ENCODE measurements at regions of chr6 and their contacts with region 1.

Region 1: DNA sequence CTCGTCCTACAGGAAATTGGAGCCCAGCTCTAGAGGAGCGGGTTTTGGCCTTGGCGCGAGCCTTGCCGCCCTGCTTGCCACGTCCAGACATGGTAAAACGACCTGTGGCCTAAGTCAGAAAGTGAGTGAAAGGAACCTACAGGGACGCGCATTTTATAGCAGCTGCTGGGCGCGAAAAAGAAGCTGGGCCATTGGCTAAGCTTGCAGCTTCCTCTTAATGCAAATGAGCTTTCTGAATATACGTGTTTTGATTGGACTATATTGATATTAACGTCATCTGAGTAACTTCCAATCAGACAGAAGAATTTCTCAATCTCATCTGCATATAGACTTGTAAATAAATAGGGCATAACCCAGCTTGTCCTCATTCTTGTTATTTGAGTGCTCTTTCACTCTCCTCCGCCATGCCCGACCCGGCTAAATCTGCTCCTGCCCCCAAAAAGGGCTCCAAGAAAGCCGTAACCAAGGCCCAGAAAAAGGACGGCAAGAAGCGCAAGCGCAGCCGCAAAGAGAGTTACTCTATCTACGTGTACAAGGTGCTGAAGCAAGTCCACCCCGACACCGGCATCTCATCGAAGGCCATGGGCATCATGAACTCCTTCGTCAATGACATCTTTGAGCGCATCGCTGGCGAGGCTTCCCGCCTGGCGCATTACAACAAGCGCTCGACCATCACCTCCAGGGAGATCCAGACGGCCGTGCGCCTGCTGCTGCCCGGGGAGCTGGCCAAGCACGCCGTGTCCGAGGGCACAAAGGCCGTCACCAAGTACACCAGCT is 18.9 kb downstream of the OR2B2 start:
- DNase-seq: peak; percentile 86 to 95
- ATAC-seq: peak; percentile 70 to 85 (median 72)
- H3K4me3 ChIP-seq: peak overlapping the region; percentile 58
- H3K4me3 Mint-ChIP-seq: no peak overlapping the region
- H3K27ac ChIP-seq: peak overlapping the region; percentile 76
- H3K27ac Mint-ChIP-seq: no peak overlapping the region
- H3K4me1 ChIP-seq: peaks cover 48% of the 10 kb centered on the region
- H3K4me1 Mint-ChIP-seq: peaks cover 34 to 36% of the 10 kb centered on the region in 2 donors
- H3K27me3 ChIP-seq: no peaks in the 10 kb centered on the region
- H3K27me3 Mint-ChIP-seq: no peaks in the 10 kb centered on the region
- CTCF ChIP-seq: no peak

Region 2: GRCh38 chr6:26196846-26197648 is 1696.2 kb before region 1 on chr6:
- intact Hi-C with region 1: loop called (anchors 5 kb)
- DNase-seq: peak; percentile 65 to 94
- ATAC-seq: peak; percentile 53 to 73 (median 62)
- H3K4me3 ChIP-seq: peak overlapping the region; percentile 92
- H3K4me3 Mint-ChIP-seq: peak overlapping the region; percentile 96
- H3K27ac ChIP-seq: peak overlapping the region; percentile 94
- H3K27ac Mint-ChIP-seq: peak overlapping the region; percentile 98 to 99
- H3K4me1 ChIP-seq: peaks cover 26% of the 10 kb centered on the region
- H3K4me1 Mint-ChIP-seq: peaks cover 45 to 51% of the 10 kb centered on the region in 2 donors
- H3K27me3 ChIP-seq: no peaks in the 10 kb centered on the region
- H3K27me3 Mint-ChIP-seq: no peaks in the 10 kb centered on the region
- CTCF ChIP-seq: no peak

Region 3: DNA sequence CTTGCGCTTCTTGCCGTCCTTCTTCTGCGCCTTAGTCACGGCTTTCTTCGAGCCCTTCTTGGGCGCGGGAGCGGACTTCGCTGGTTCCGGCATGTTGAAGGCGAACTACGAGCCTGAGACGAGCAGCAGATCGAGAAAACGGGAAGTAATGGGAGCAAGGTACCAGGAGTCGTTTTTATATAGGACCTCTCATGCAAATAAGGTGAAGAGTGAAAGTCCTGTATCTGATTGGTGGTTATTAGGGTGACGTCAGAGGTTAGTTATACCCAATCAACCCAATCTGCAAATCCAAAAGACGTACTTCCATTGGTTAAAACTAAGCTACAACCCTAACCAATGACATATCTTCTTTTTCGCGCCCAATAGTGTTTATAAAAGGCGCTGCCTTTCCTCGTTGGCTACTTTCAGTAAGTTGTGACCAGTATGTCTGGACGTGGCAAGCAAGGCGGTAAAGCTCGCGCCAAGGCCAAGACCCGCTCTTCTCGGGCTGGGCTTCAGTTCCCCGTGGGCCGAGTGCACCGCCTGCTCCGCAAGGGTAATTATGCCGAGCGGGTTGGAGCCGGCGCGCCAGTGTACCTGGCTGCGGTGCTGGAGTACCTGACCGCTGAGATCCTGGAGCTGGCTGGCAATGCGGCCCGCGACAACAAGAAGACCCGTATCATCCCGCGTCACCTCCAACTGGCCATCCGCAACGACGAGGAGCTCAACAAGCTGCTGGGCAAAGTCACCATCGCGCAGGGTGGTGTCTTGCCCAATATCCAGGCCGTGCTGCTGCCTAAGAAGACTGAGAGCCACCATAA is 746.3 kb before region 1 on chr6:
- intact Hi-C with region 1: loop called (anchors 5 kb)
- DNase-seq: peak; percentile 74 to 97
- ATAC-seq: peak; percentile 76 to 88 (median 82)
- H3K4me3 ChIP-seq: peak overlapping the region; percentile 74
- H3K4me3 Mint-ChIP-seq: no peak overlapping the region
- H3K27ac ChIP-seq: peak overlapping the region; percentile 88
- H3K27ac Mint-ChIP-seq: no peak overlapping the region
- H3K4me1 ChIP-seq: peaks cover 23% of the 10 kb centered on the region
- H3K4me1 Mint-ChIP-seq: peaks cover 0 to 3% of the 10 kb centered on the region in 2 donors
- H3K27me3 ChIP-seq: no peaks in the 10 kb centered on the region
- H3K27me3 Mint-ChIP-seq: no peaks in the 10 kb centered on the region
- CTCF ChIP-seq: no peak

Region 4: DNA sequence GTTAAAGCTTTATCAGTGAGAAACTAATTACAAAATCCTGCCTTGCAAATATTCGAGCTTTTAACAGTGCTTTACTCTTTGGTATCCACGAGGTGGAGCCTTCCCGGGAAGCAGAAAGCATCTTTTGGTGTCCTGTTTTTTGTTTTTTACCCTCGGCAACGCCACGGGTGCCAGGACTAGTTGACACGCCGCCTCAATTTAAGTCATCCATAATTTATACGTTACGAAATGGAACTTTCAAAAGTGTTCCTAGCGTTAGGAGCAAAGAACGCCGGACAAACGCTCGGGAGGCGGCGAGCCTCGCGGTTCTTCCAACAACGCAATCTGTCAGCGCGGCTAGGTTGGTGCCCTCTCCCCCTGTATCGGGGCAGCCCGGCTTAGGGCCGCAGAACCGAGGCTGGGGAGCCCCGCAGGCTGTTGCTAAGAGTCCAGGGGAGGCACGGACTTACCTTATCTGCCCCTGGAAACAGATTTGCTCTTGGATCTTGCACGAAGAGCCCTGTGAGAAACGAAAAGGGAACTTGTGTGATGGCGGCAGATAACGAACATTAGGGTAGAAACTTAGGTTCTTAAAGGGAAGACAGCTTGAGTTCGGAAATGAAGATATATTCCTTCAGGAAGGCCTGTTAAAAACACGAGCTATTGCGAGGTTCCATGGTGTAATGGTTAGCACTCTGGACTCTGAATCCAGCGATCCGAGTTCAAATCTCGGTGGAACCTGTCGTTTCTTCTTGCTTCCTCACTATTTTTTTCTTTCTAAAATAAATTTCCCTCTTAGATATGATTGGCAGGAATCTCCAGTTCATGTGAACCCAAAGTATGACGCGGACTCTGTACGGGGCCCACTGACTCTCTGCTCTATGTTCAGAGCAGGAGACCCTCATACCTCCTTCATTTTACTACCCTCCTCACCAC is 374.1 kb before region 1 on chr6:
- intact Hi-C with region 1: loop called (anchors 2 kb)
- DNase-seq: peak; percentile 49 to 88
- ATAC-seq: peak; percentile 61 to 81 (median 81)
- H3K4me3 ChIP-seq: peak overlapping the region; percentile 82
- H3K4me3 Mint-ChIP-seq: peak overlapping the region; percentile 91
- H3K27ac ChIP-seq: peak overlapping the region; percentile 71
- H3K27ac Mint-ChIP-seq: peak overlapping the region; percentile 87 to 88
- H3K4me1 ChIP-seq: peaks cover 11% of the 10 kb centered on the region
- H3K4me1 Mint-ChIP-seq: peaks cover 16 to 17% of the 10 kb centered on the region in 2 donors
- H3K27me3 ChIP-seq: peaks cover 9% of the 10 kb centered on the region
- H3K27me3 Mint-ChIP-seq: peaks cover 29 to 46% of the 10 kb centered on the region in 2 donors
- CTCF ChIP-seq: peak; percentile 79

Region 5: GRCh38 chr6:27809939-27810767 is 83.1 kb before region 1 on chr6:
- intact Hi-C with region 1: loop called (anchors 1 kb)
- DNase-seq: peak; percentile 76 to 95
- ATAC-seq: peak; percentile 55 to 71 (median 63)
- H3K4me3 ChIP-seq: peak overlapping the region; percentile 63
- H3K4me3 Mint-ChIP-seq: peak overlapping the region; percentile 95
- H3K27ac ChIP-seq: peak overlapping the region; percentile 88
- H3K27ac Mint-ChIP-seq: peak overlapping the region; percentile 96 to 99
- H3K4me1 ChIP-seq: peaks cover 37% of the 10 kb centered on the region
- H3K4me1 Mint-ChIP-seq: peaks cover 49 to 56% of the 10 kb centered on the region in 2 donors
- H3K27me3 ChIP-seq: no peaks in the 10 kb centered on the region
- H3K27me3 Mint-ChIP-seq: no peaks in the 10 kb centered on the region
- CTCF ChIP-seq: no peak

Region 6: DNA sequence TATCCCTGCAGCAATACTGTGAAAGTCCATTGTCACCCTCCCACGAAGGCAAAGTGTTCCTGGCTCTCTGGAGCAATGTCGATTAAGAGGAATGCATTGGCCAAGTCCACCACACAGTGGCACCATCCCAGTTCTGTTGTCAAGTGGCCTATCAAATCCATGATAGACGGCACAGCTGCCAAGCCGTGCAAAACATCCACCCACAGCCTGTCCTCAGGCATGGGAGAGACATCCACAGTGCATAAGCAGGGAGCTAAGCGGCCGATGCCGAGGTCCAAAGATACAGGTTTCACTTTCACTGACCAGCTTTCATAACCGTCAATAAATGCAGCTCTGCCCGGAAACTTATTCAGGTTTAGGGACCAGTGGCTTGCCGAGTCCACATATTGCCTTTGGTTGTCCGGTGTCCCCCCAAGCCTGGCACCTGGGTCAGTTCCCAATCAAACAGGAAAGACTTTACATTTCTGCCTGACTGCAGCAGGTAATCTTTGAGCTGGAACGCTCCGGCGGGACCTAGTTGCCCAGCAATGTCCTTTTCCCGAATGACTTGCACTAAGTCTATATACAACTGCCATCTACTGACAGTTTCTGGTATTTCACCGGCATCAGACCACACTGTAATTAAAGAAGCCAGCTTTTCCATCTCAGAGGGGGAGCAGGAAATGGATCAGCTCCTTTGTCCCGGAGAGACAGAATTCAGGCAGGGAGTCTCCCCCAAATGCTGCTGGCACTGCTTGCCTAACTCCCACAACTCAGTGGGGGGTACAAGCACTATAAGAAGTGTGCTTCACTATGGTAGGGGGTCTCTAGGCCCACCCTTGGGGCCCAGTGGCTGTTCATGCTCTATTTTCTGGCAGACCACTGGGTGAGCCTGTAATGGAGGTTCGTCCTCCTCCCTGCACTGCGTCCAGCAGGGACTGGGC is 462.8 kb after region 1 on chr6:
- intact Hi-C with region 1: loop called (anchors 10 kb)
- DNase-seq: peak; percentile 55 to 86
- ATAC-seq: peak; percentile 91 to 96 (median 91)
- H3K4me3 ChIP-seq: peak overlapping the region; percentile 64
- H3K4me3 Mint-ChIP-seq: peak overlapping the region; percentile 96
- H3K27ac ChIP-seq: peak overlapping the region; percentile 43
- H3K27ac Mint-ChIP-seq: peak overlapping the region; percentile 81 to 93
- H3K4me1 ChIP-seq: peaks cover 18% of the 10 kb centered on the region
- H3K4me1 Mint-ChIP-seq: peaks cover 20 to 23% of the 10 kb centered on the region in 2 donors
- H3K27me3 ChIP-seq: no peaks in the 10 kb centered on the region
- H3K27me3 Mint-ChIP-seq: no peaks in the 10 kb centered on the region
- CTCF ChIP-seq: peak; percentile 91